ENCODE measurements at regions of chr10 and their contacts with region 1.

Region 1: GRCh38 chr10:22723343-22723779 is 9.0 kb upstream of the PIP4K2A start:
- DNase-seq: peak; percentile 86
- ATAC-seq: peak; percentile 93
- H3K4me3 ChIP-seq: peak overlapping the region in 3 of 5 experiments; percentile 21 to 50 (median 29)
- H3K4me3 Mint-ChIP-seq: peak overlapping the region; percentile 88
- H3K27ac ChIP-seq: no peak overlapping the region
- H3K27ac Mint-ChIP-seq: peak overlapping the region; percentile 85
- H3K4me1 ChIP-seq: peaks cover 31 to 38% of the 10 kb centered on the region in 2 donors
- H3K4me1 Mint-ChIP-seq: peaks cover 58% of the 10 kb centered on the region
- H3K27me3 ChIP-seq: no peaks in the 10 kb centered on the region
- H3K27me3 Mint-ChIP-seq: no peaks in the 10 kb centered on the region
- CTCF ChIP-seq: no peak

Region 2: GRCh38 chr10:22742678-22743077 is 19.3 kb after region 1 on chr10:
- CTCF ChIA-PET with region 1: interaction called, 3 read pairs
- POLR2A ChIA-PET with region 1: interaction called, 3 read pairs
- intact Hi-C with region 1: loop called (anchors 2 kb)
- DNase-seq: peak; percentile 79
- ATAC-seq: peak; percentile 100
- H3K4me3 ChIP-seq: no peak overlapping the region
- H3K4me3 Mint-ChIP-seq: peak overlapping the region; percentile 21
- H3K27ac ChIP-seq: peak overlapping the region; percentile 15 to 40
- H3K27ac Mint-ChIP-seq: peak overlapping the region; percentile 61
- H3K4me1 ChIP-seq: peaks cover 21 to 25% of the 10 kb centered on the region in 2 donors
- H3K4me1 Mint-ChIP-seq: peaks cover 21% of the 10 kb centered on the region
- H3K27me3 ChIP-seq: no peaks in the 10 kb centered on the region
- H3K27me3 Mint-ChIP-seq: no peaks in the 10 kb centered on the region
- CTCF ChIP-seq: no peak

Region 3: GRCh38 chr10:22765660-22766547 is 42.5 kb after region 1 on chr10:
- CTCF ChIA-PET with region 1: no interaction called
- POLR2A ChIA-PET with region 1: interaction called, 13 read pairs
- intact Hi-C with region 1: loop called (anchors 5 kb)
- DNase-seq: peak; percentile 68
- ATAC-seq: peak; percentile 71
- H3K4me3 ChIP-seq: no peak overlapping the region
- H3K4me3 Mint-ChIP-seq: peak overlapping the region; percentile 30
- H3K27ac ChIP-seq: peak overlapping the region in 1 of 2 donors; percentile 27
- H3K27ac Mint-ChIP-seq: peak overlapping the region; percentile 54
- H3K4me1 ChIP-seq: peaks cover 36 to 38% of the 10 kb centered on the region in 2 donors
- H3K4me1 Mint-ChIP-seq: peaks cover 45% of the 10 kb centered on the region
- H3K27me3 ChIP-seq: no peaks in the 10 kb centered on the region
- H3K27me3 Mint-ChIP-seq: no peaks in the 10 kb centered on the region
- CTCF ChIP-seq: no peak

Measured in B cell (primary cell).